PC-3 (cell line): ENCODE measurements at regions of chr12 and their contacts with region 1.

Region 1: DNA sequence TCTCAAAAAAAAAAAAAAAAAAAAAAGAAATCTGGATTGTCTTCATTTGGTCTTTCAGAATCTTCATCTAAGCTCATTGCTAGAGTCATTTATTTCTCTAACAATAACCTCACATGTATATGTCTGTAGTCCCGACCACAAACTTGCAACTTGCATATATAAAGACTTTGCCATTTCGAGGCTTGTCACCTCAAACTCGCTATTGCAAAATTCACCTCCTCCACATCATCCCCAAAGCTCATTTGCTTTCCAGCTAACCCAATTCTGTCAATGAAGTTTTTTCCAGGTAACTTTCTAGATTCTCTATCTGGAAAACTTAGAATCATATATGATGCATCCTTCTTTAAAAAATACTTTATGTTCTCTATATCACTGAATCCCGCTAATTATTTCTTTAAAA is 393.2 kb upstream of the ATXN7L3B start:
- DNase-seq: no peak
- ATAC-seq: no peak
- H3K4me3 ChIP-seq: no peak overlapping the region
- H3K27ac ChIP-seq: no peak overlapping the region
- H3K4me1 ChIP-seq: no peaks in the 10 kb centered on the region
- H3K27me3 ChIP-seq: no peaks in the 10 kb centered on the region
- CTCF ChIP-seq: no peak

Region 2: DNA sequence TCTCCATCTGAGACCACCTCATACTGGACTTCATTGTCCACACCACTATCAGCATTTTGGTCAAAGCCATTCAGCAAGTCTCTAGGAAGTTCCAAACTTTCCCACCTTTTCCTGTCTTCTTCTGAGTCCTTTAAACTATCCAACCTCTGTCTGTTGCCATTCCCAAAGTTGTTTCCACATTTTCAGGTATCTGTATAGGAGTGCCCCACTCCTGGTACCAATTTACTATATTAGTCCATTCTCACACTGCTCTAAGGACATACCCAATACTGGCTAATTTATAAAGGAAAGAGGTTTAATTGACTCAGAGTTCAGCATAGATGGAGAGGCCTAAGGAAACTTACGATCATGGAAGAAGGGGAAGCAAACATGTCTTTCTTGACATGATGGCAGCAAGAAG is 101.1 kb after region 1 on chr12:
- CTCF ChIA-PET with region 1: no interaction called
- POLR2A ChIA-PET with region 1: interaction called, 11 read pairs
- intact Hi-C with region 1: no loop called
- DNase-seq: no peak
- ATAC-seq: no peak
- H3K4me3 ChIP-seq: no peak overlapping the region
- H3K27ac ChIP-seq: no peak overlapping the region
- H3K4me1 ChIP-seq: no peaks in the 10 kb centered on the region
- H3K27me3 ChIP-seq: no peaks in the 10 kb centered on the region
- CTCF ChIP-seq: no peak